PC-3 (cell line): ENCODE measurements at regions of chr9 and their contacts with region 1.

Region 1: DNA sequence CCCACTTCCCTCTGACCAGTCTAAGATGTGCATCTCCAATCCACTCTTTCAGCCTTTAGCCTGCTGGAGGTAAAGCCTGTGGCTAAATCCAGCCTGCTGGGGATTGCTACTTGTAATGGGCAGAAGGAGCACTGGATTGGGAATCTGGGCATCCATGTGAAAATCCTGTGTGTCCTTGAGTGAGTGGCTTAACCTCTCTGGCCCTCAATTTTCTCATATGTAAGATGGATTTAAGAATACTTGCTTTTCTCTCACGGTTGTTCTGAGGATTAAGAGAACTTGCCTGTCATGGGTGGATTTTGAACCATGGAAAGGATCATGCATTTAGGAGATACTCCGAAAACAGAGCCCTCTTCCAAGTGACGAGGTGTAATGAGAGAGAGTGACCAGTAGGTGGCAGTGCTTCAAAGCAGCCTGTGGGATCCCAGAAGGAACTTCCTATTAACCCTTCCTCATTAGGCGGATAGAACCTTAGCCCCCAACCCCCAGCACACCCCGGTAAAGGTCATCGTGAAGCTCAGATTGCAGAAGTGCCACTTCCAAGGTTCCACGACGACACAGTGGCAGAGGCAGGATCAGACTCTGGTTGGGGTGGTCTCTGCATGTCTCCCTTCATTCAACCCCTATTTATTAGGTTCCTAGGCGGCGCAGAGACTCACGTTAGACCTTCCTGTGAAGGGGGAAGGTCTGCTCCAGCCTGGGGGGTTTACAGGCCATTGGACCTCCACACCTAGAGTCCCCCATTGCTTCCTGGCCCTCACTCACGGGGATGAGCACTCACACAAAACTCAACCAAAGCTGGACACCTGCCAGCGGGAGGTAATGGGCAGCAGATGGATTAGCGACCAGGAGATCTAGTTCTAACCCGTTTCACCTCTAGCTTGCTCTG is 68.7 kb upstream of the ZNF618 start:
- DNase-seq: peak; percentile 64
- ATAC-seq: peak; percentile 66
- H3K4me3 ChIP-seq: peak overlapping the region; percentile 51; the same call in 1 of the 2 replicates
- H3K27ac ChIP-seq: no peak overlapping the region
- H3K4me1 ChIP-seq: 0 out of 2 replicates have a peak, but pooled peaks cover 5% of the 10 kb centered on the region
- H3K27me3 ChIP-seq: peaks cover 4% of the 10 kb centered on the region; the same call in 1 of the 2 replicates
- CTCF ChIP-seq: peak; percentile 82

Region 2: GRCh38 chr9:112288029-112288428 is 1519.4 kb before region 1 on chr9:
- CTCF ChIA-PET with region 1: no interaction called
- POLR2A ChIA-PET with region 1: no interaction called
- intact Hi-C with region 1: no loop called
- DNase-seq: no peak
- ATAC-seq: no peak
- H3K4me3 ChIP-seq: no peak overlapping the region
- H3K27ac ChIP-seq: no peak overlapping the region
- H3K4me1 ChIP-seq: no peaks in the 10 kb centered on the region
- H3K27me3 ChIP-seq: no peaks in the 10 kb centered on the region
- CTCF ChIP-seq: no peak

Region 3: DNA sequence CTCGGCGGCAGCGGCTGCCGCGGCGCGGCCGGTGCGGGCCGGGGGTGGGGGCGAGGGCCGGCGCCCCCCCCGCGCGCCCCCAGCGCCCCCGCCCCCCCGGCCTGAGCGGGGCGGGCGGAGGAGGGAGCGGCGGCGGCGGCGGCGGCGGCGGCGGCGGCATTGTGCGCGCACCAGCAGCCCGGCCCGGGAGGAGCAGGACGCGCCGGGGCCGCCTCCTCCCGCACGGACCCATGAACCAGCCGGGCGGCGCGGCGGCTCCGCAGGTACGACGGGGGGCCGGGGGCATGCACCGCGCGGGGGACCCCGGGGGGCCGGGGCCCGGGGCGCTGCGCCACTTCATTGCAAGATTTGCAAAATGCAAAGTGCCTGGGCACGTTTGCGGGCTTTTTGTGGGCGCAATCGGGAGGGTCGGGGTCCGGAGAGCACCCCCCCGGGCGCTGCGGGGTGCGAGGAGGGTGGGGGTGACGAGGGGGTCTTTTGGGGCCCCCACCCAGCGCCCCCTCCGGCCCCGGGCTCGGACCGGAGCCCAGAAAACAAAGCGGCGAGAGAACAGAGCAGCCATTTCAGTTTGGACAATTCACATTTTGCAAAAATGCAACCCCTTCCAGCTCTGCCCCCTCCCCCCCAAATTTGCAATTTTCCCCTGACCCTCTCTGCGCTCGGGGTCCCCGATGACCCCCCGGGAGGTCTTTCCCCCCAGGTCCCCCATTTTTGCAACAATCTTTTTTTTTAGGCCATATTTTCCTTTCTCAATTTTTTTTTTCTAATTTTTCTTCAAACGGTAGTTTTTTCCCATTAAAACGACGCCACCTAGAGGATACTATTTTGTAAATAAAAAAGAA is 69.0 kb after region 1 on chr9 and contains the start of gene ZNF618:
- CTCF ChIA-PET with region 1: no interaction called
- POLR2A ChIA-PET with region 1: no interaction called
- intact Hi-C with region 1: loop called (anchors 5 kb)
- DNase-seq: peak; percentile 41
- ATAC-seq: peak; percentile 75
- H3K4me3 ChIP-seq: peak within 1 kb of the TSS; percentile 86
- H3K27ac ChIP-seq: no peak within 1 kb of the TSS
- H3K4me1 ChIP-seq: no peaks in the 10 kb centered on the region; the same call in 1 of the 2 replicates
- H3K27me3 ChIP-seq: no peaks in the 10 kb centered on the region
- CTCF ChIP-seq: peak; percentile 38
- total RNA-seq, gene ZNF618: 4.2 and 5.8 TPM in 2 replicates

Region 4: GRCh38 chr9:113963017-113963620 is 155.7 kb after region 1 on chr9:
- CTCF ChIA-PET with region 1: no interaction called
- POLR2A ChIA-PET with region 1: no interaction called
- intact Hi-C with region 1: loop called (anchors 1 kb)
- DNase-seq: peak; percentile 47
- ATAC-seq: peak; percentile 22; the same call in 1 of the 2 replicates
- H3K4me3 ChIP-seq: no peak overlapping the region
- H3K27ac ChIP-seq: no peak overlapping the region
- H3K4me1 ChIP-seq: peaks cover 7% of the 10 kb centered on the region
- H3K27me3 ChIP-seq: no peaks in the 10 kb centered on the region
- CTCF ChIP-seq: peak; percentile 71